Breast epithelium (tissue), 4 donors: ENCODE measurements at regions of chr10 and their contacts with region 1.

Region 1: GRCh38 chr10:17989908-17990767 is 38.4 kb downstream of the SLC39A12 start:
- DNase-seq: no peak
- H3K4me3 ChIP-seq: no peak overlapping the region
- H3K27ac ChIP-seq: no peak overlapping the region
- H3K4me1 ChIP-seq: no peaks in the 10 kb centered on the region
- H3K27me3 ChIP-seq: no peaks in the 10 kb centered on the region
- CTCF ChIP-seq: no peak
- POLR2A ChIP-seq: no peak

Region 2: GRCh38 chr10:17782921-17783665 is 207.0 kb before region 1 on chr10:
- intact Hi-C with region 1: no loop called
- DNase-seq: no peak
- H3K4me3 ChIP-seq: no peak overlapping the region
- H3K27ac ChIP-seq: no peak overlapping the region
- H3K4me1 ChIP-seq: no peaks in the 10 kb centered on the region
- H3K27me3 ChIP-seq: no peaks in the 10 kb centered on the region
- CTCF ChIP-seq: no peak
- POLR2A ChIP-seq: no peak

Region 3: DNA sequence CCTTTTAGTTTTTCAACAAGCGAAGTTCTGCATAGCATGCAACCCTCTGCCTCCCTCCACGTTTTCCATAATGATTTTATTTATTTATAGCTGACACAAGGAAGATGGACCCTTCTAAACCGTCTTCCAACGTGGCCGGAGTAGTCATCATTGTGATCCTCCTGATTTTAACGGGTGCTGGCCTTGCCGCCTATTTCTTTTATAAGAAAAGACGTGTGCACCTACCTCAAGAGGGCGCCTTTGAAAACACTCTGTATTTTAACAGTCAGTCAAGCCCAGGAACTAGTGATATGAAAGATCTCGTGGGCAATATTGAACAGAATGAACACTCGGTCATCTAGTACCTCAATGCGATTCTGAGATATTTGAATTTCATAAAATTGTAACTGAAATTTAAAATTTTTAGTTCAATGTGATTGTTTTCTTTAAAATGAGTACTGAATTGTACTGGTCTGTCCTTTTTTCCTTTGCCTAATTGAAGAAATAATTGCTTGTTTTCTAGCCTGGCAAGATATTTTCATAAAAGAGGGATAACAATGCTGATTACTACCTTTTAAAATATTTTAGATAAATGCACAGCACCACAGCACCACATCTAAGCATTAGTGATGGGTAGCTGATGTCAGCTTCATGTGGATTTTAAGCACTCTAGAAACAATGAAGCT is 79.9 kb before region 1 on chr10:
- intact Hi-C with region 1: no loop called
- DNase-seq: no peak
- H3K4me3 ChIP-seq: no peak overlapping the region
- H3K27ac ChIP-seq: no peak overlapping the region
- H3K4me1 ChIP-seq: no peaks in the 10 kb centered on the region
- H3K27me3 ChIP-seq: no peaks in the 10 kb centered on the region
- CTCF ChIP-seq: peak in 2 of 3 donors; percentile 28 to 30
- POLR2A ChIP-seq: no peak

Region 4: DNA sequence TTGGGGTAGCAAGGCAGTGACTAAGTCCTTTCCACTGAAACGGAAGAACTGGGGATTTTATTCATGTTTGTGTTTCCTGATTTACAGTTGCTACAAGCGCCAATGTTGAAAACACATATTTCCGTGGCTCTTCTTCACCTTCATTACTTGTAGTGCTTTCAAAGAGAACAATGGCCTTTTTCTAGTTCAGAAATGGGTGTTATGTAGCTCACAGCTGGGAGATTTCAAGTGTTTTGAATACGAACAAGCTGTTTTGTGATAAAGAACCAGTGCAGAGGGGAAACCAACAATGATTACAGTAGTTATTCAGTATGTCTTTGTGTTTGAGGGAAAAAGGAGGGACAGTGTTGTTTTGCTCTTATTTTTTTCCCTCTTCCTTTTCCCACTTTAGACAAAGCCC is 507.8 kb after region 1 on chr10:
- intact Hi-C with region 1: loop called (anchors 5 kb)
- DNase-seq: no peak
- H3K4me3 ChIP-seq: no peak overlapping the region
- H3K27ac ChIP-seq: no peak overlapping the region
- H3K4me1 ChIP-seq: no peaks in the 10 kb centered on the region
- H3K27me3 ChIP-seq: no peaks in the 10 kb centered on the region
- CTCF ChIP-seq: no peak
- POLR2A ChIP-seq: no peak

Region 5: DNA sequence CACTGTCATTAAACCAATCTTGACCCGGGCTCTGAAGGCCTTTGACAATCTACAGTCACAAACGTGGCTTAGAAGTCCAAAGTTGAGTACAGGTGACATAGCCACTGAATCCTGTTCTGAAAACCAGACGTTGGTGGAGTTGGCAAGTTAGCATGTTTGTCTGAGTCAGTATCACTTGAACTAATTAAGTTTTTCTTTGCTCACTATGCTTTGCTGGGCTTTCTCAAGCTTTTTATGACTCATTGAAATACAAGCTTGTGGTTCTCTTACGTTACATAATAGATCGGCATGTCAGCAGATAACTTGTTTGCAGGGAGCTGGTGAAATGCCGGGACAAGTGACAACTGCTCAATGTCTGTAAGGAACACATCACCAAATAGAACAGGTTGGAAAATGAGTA is 722.9 kb after region 1 on chr10:
- intact Hi-C with region 1: no loop called
- DNase-seq: peak in 1 of 2 donors; percentile 22
- H3K4me3 ChIP-seq: no peak overlapping the region
- H3K27ac ChIP-seq: peak overlapping the region; percentile 58 to 73
- H3K4me1 ChIP-seq: no peaks in the 10 kb centered on the region
- H3K27me3 ChIP-seq: no peaks in the 10 kb centered on the region
- CTCF ChIP-seq: no peak
- POLR2A ChIP-seq: no peak